ENCODE measurements at regions of chr10 and their contacts with region 1.

Region 1: GRCh38 chr10:128064108-128064969 is 61.9 kb downstream of the MKI67 start:
- DNase-seq: no peak
- H3K4me3 ChIP-seq: peak overlapping the region; percentile 48
- H3K27ac ChIP-seq: peak overlapping the region; percentile 60
- H3K4me1 ChIP-seq: peaks cover 57% of the 10 kb centered on the region
- CTCF ChIP-seq: no peak

Region 2: DNA sequence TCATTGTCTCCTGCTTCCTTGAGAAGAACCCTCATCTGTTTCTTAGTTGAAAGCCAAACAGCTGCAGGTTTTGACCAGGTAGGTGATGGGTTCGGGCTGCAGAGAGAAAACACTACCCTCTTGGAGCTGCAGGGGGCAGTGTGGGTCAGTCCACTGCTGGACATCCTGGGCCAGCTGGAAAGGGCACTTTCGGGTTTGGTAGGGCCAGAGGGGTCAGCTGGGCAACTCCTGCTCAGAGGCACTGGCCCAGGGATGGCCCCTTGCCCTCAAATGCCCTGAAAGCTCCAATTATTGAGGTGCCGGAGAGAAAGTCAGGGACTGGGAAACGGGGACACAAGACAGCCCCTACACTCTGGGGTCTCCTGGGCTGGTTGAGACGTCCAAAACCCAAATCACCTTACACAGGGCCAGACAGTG is 28.8 kb before region 1 on chr10:
- CTCF ChIA-PET with region 1: interaction called, 7 read pairs
- POLR2A ChIA-PET with region 1: interaction called, 3 read pairs
- intact Hi-C with region 1: loop called (anchors 1 kb)
- DNase-seq: peak; percentile 40
- H3K4me3 ChIP-seq: no peak overlapping the region
- H3K27ac ChIP-seq: no peak overlapping the region
- H3K4me1 ChIP-seq: no peaks in the 10 kb centered on the region
- CTCF ChIP-seq: peak; percentile 91

Region 3: DNA sequence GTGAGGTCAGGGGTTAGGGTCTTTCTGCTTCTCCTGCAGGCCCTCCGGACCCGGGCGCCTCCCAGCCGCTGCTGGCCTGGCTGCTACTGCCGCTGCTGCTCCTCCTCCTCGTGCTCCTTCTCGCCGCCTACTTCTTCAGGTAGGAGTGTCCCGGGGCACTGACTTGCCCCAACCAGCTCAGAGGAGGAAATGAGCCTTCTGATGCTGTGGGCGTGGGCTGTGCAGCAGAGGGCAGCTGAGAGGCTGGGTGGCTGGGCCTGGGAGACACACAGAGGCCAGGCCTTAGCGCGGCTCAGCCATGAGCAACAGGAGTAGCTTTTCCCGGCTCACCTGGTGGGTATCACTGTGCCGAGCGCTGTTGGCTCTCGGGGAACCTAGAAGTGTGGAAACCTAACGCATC is 17.0 kb before region 1 on chr10:
- CTCF ChIA-PET with region 1: interaction called, 17 read pairs
- POLR2A ChIA-PET with region 1: interaction called, 37 read pairs
- intact Hi-C with region 1: loop called (anchors 1 kb)
- DNase-seq: peak; percentile 87
- H3K4me3 ChIP-seq: peak overlapping the region; percentile 79
- H3K27ac ChIP-seq: peak overlapping the region; percentile 75
- H3K4me1 ChIP-seq: peaks cover 42% of the 10 kb centered on the region
- CTCF ChIP-seq: no peak

Region 4: DNA sequence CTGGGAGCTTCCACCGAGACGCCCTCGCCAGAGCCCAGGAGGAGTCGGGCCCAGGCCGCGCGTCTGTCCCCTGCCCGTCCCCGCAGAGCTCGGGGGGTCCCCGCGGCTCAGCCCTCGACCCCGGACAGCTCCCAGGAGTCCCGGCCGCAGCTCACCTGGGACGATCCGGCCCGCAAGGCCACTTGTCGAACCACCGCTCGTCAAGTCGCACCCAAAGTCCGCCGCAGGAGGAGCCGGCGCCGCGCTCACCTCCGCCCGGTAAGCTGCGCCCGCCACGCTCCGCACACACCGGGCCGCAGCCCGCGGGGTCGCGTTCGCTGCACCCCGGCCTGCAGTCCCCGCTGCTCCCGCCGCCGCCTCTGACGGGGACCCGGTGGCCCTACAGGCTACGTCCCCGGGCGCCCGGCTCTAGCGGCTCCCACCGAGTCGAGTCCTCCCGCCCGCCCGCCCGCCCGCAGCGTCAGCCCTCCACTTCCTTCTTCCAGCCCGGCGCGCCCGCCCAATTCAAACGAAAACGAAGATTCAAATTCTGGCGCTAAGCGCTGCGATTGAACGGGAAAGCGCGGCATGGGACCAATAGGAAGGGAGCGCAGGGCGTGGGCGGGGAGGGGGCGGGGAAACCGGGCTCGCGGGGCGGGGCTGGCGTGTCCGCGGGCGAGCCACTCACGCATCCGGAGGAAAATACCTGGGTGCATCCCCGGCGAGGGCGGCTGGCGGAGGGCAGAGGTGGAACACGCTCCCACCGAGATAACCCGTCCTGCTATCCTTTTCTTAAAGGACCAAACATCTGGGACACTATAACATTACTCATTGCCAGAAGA is 61.8 kb after region 1 on chr10 and contains the start of gene MKI67:
- CTCF ChIA-PET with region 1: no interaction called
- POLR2A ChIA-PET with region 1: no interaction called
- intact Hi-C with region 1: loop called (anchors 2 kb)
- DNase-seq: peak; percentile 95
- H3K4me3 ChIP-seq: peak within 1 kb of the TSS; percentile 92
- H3K27ac ChIP-seq: peak within 1 kb of the TSS; percentile 72
- H3K4me1 ChIP-seq: peaks cover 38% of the 10 kb centered on the region
- CTCF ChIP-seq: no peak
- total RNA-seq, gene MKI67: 139 and 165 TPM in 2 replicates